CD8-positive, alpha-beta T cell (primary cell): ENCODE measurements at regions of chr21 and their contacts with region 1.

Region 1: GRCh38 chr21:14533504-14534428 is 12.3 kb downstream of the SAMSN1 start:
- DNase-seq: peak in 3 of 9 experiments; percentile 17 to 90 (median 85)
- ATAC-seq: peak; percentile 79
- H3K4me3 ChIP-seq: peak overlapping the region in 1 of 2 experiments; percentile 46
- H3K4me3 Mint-ChIP-seq: peak overlapping the region; percentile 75
- H3K27ac ChIP-seq: peak overlapping the region; percentile 55 to 98
- H3K27ac Mint-ChIP-seq: peak overlapping the region; percentile 96
- H3K4me1 ChIP-seq: peaks cover 12% of the 10 kb centered on the region
- H3K4me1 Mint-ChIP-seq: peaks cover 61% of the 10 kb centered on the region
- H3K27me3 ChIP-seq: no peaks in the 10 kb centered on the region
- H3K27me3 Mint-ChIP-seq: no peaks in the 10 kb centered on the region
- CTCF ChIP-seq: no peak

Region 2: GRCh38 chr21:14523234-14523633 is 10.5 kb before region 1 on chr21:
- CTCF ChIA-PET with region 1: no interaction called
- POLR2A ChIA-PET with region 1: interaction called, 3 read pairs
- intact Hi-C with region 1: loop called in 1 of 2 experiments (anchors 1 kb)
- DNase-seq: peak in 3 of 9 experiments; percentile 12 to 63 (median 56)
- ATAC-seq: peak; percentile 49
- H3K4me3 ChIP-seq: peak overlapping the region in 1 of 2 experiments; percentile 18
- H3K4me3 Mint-ChIP-seq: peak overlapping the region; percentile 67
- H3K27ac ChIP-seq: peak overlapping the region in 1 of 2 experiments; percentile 21
- H3K27ac Mint-ChIP-seq: peak overlapping the region; percentile 4
- H3K4me1 ChIP-seq: peaks cover 10% of the 10 kb centered on the region
- H3K4me1 Mint-ChIP-seq: peaks cover 58% of the 10 kb centered on the region
- H3K27me3 ChIP-seq: no peaks in the 10 kb centered on the region
- H3K27me3 Mint-ChIP-seq: no peaks in the 10 kb centered on the region
- CTCF ChIP-seq: no peak

Region 3: DNA sequence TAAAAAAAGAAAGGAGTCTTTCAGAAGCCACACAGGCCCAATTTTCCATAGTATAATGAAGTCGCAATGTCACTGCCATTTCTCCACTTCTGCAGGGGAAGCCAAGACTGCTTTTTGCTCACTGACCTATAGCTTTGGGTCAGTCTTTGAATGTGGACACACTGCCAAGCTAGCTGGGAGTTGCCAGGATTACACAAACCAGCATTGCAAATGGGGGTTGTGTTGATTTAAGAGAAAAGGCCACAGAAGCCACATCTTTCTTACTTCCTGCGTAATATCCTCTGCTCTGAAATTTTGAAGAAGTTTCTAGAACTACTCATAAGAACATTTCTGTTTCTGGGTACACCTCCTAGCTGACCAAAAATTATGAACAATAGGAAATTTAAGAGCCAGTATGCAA is 58.1 kb after region 1 on chr21:
- CTCF ChIA-PET with region 1: no interaction called
- POLR2A ChIA-PET with region 1: no interaction called
- intact Hi-C with region 1: loop called in 1 of 2 experiments (anchors 2 kb)
- DNase-seq: peak in 2 of 9 experiments; percentile 35 to 56
- ATAC-seq: peak; percentile 23
- H3K4me3 ChIP-seq: no peak overlapping the region
- H3K4me3 Mint-ChIP-seq: no peak overlapping the region
- H3K27ac ChIP-seq: peak overlapping the region in 1 of 2 experiments; percentile 33
- H3K27ac Mint-ChIP-seq: peak overlapping the region; percentile 14
- H3K4me1 ChIP-seq: peaks cover 8% of the 10 kb centered on the region
- H3K4me1 Mint-ChIP-seq: peaks cover 11% of the 10 kb centered on the region
- H3K27me3 ChIP-seq: no peaks in the 10 kb centered on the region
- H3K27me3 Mint-ChIP-seq: no peaks in the 10 kb centered on the region
- CTCF ChIP-seq: no peak